ENCODE measurements at regions of chr18 and their contacts with region 1.

Region 1: GRCh38 chr18:77000527-77000926 is 132.1 kb downstream of the MBP start:
- DNase-seq: peak; percentile 55
- ATAC-seq: no peak
- H3K4me3 Mint-ChIP-seq: no peak overlapping the region
- H3K27ac Mint-ChIP-seq: no peak overlapping the region
- H3K4me1 Mint-ChIP-seq: peaks cover 40% of the 10 kb centered on the region
- H3K27me3 Mint-ChIP-seq: peaks cover 6% of the 10 kb centered on the region

Region 2: GRCh38 chr18:76943542-76944339 is 56.8 kb before region 1 on chr18:
- CTCF ChIA-PET with region 1: no interaction called
- POLR2A ChIA-PET with region 1: no interaction called
- DNase-seq: no peak
- ATAC-seq: no peak
- H3K4me3 Mint-ChIP-seq: no peak overlapping the region
- H3K27ac Mint-ChIP-seq: no peak overlapping the region
- H3K4me1 Mint-ChIP-seq: peaks cover 24% of the 10 kb centered on the region
- H3K27me3 Mint-ChIP-seq: no peaks in the 10 kb centered on the region

Region 3: DNA sequence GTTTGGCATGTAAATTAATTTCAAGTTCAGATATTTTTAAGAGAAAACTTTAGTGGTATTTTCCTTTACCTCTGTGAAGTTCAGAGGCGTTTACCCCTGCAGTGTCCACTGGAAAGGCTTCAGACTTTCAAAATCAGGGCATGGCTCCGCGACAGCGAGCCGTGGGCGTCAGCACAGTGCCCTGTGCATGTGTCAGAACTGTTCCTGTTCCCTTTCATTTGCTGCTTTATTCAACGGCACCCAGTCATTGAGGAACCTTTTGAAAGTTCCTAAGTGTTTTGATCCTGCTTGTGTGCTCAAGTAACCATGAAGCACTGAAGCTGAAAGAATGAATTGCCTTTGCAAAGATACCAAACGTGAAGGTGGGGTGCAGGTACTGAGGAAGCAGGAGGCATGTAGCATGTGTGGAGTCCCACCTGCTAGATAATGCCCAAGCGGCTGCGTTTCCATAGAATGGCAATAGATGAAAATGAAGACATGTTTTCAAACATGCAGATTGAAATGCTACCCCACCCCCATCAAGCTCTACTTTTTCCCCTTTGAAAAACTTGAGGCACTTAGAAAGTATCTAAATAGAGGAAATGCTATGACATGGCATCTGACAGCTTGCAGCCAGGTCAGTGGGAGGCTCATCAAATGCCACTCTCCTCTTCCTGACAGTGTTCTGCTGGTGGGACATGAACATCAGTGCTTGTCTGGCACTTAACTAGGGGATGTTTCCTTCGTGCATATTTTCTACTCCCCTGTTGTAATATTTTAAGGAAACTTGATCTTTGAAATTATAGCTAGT is 29.6 kb before region 1 on chr18:
- CTCF ChIA-PET with region 1: interaction called, 18 read pairs
- POLR2A ChIA-PET with region 1: interaction called, 3 read pairs
- DNase-seq: no peak
- ATAC-seq: no peak
- H3K4me3 Mint-ChIP-seq: no peak overlapping the region
- H3K27ac Mint-ChIP-seq: no peak overlapping the region
- H3K4me1 Mint-ChIP-seq: no peaks in the 10 kb centered on the region
- H3K27me3 Mint-ChIP-seq: no peaks in the 10 kb centered on the region

Region 4: DNA sequence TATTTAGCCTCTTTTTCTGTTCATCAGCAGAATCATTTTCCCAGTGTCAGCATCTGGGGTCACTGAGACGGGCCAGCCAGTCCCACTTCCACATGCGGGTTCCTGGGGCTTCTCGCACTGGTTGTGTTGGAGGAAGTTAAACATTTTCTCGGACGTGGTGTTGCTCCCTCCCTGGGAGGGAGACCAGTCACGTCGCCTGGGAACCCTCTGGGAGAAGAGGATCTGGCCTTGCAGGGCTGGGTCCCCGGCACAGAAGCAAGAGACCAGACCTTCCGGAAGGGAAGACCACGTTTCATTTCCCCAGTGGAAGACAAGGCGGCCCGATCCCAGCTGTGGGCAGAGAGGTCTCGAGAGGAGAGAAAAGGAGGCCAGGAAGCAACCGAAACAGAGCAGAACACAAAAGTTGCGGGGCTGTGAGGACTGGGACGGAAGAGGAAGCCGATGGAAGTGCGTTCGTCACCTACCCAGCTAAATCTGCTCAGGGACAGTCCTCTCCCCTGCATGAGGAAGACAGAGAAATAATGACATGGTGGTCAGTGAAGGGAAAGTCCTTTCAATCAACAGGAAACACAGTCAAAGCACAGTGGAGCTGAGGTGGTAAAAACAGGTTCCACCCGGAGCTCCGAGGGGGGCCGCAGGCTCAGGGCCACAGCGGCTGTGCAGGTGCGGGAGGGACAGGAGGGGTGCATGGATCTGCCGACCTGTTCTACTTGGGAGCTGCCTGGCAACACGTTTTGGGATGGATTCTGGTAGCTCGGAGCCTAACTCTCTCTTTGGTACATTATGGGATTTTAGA is 12.3 kb before region 1 on chr18:
- CTCF ChIA-PET with region 1: interaction called, 27 read pairs
- POLR2A ChIA-PET with region 1: interaction called, 3 read pairs
- DNase-seq: no peak
- ATAC-seq: no peak
- H3K4me3 Mint-ChIP-seq: no peak overlapping the region
- H3K27ac Mint-ChIP-seq: no peak overlapping the region
- H3K4me1 Mint-ChIP-seq: peaks cover under 1% of the 10 kb centered on the region
- H3K27me3 Mint-ChIP-seq: no peaks in the 10 kb centered on the region

Region 5: GRCh38 chr18:77035380-77036187 is 35.1 kb after region 1 on chr18:
- CTCF ChIA-PET with region 1: interaction called, 15 read pairs
- POLR2A ChIA-PET with region 1: no interaction called
- DNase-seq: no peak
- ATAC-seq: no peak
- H3K4me3 Mint-ChIP-seq: no peak overlapping the region
- H3K27ac Mint-ChIP-seq: no peak overlapping the region
- H3K4me1 Mint-ChIP-seq: peaks cover 38% of the 10 kb centered on the region
- H3K27me3 Mint-ChIP-seq: no peaks in the 10 kb centered on the region

Region 6: DNA sequence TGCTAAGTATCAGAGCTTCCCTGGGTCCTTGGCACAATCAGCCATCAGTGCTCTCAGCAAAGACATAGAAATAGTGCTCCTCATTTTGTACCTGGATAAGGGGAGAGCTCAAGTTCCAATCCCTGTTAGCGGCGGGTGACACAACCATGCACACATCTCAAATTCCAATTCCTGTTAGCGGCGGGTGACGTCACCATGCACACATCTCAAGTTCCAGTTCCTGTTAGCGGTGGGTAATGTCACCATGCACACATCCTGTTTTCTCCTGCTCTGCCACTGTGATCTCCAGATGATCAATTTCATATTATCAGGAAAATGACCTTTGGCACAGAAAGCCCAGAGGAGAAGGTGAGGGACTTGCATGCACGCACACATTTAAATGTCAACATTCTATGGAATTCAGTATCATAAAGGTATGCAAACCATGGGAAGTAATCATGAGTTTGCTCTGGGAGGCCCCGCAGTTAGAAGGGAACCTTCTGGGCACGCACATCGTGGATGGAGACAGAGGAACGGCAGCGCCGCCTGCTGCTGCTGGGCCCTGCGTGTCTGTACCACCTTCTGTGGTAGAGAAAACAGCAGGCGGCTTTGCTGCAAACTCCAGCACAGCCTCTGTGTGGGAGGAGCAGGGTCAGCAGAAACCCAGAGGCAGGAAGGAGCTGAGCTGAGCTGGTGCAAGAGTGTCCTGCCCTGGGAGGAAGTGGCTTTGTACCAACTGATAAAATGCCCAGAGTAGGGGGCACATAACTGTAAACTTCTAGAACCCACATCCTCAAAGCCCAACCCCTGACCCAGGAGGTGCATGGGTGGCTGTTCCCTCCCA is 54.3 kb after region 1 on chr18:
- CTCF ChIA-PET with region 1: interaction called, 43 read pairs
- POLR2A ChIA-PET with region 1: interaction called, 4 read pairs
- DNase-seq: peak; percentile 93
- ATAC-seq: peak; percentile 91
- H3K4me3 Mint-ChIP-seq: peak overlapping the region; percentile 85
- H3K27ac Mint-ChIP-seq: peak overlapping the region; percentile 100
- H3K4me1 Mint-ChIP-seq: peaks cover 71% of the 10 kb centered on the region
- H3K27me3 Mint-ChIP-seq: no peaks in the 10 kb centered on the region

Region 7: DNA sequence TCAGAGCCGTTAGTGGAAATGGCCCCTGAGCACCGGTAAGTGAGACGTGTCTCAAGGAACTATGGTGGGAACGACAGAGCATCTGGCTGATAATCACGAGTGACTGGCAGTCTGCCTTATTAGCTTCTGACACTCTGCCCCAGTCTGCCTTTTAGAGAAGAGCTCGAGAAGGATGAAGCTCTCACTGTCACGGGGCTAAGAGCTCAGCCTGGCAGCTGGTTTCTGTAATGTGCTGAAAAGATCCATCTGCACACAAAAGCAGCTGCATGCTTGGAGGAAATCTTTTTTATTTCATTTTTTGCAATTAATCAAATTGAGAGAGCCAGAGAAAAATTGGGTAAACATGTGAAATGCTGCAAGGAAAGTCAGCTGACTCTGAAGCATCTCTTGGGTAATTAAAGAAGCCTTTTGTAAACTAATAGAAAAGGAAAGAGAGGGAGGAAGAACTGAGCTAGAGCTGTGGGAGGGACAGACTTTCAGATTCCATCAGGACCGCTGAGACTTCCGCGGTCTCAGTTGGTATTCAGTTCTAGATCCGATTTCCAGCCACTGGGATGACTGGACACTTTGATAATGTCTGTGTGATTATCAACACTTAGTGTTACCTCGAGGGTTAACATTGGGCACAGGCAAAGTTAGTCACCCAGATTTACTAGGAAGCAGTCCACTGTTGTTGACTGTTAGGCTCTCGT is 107.6 kb after region 1 on chr18:
- CTCF ChIA-PET with region 1: interaction called, 12 read pairs
- POLR2A ChIA-PET with region 1: no interaction called
- DNase-seq: no peak
- ATAC-seq: peak; percentile 7
- H3K4me3 Mint-ChIP-seq: peak overlapping the region; percentile 41
- H3K27ac Mint-ChIP-seq: peak overlapping the region; percentile 73
- H3K4me1 Mint-ChIP-seq: peaks cover 91% of the 10 kb centered on the region
- H3K27me3 Mint-ChIP-seq: no peaks in the 10 kb centered on the region

Region 8: GRCh38 chr18:77207540-77207939 is 207.0 kb after region 1 on chr18:
- CTCF ChIA-PET with region 1: interaction called, 78 read pairs
- POLR2A ChIA-PET with region 1: no interaction called
- DNase-seq: peak; percentile 55
- ATAC-seq: peak; percentile 68
- H3K4me3 Mint-ChIP-seq: no peak overlapping the region
- H3K27ac Mint-ChIP-seq: no peak overlapping the region
- H3K4me1 Mint-ChIP-seq: peaks cover 49% of the 10 kb centered on the region
- H3K27me3 Mint-ChIP-seq: no peaks in the 10 kb centered on the region